AG04449 (cell line): ENCODE measurements at regions of chr4 and their contacts with region 1.

Region 1: DNA sequence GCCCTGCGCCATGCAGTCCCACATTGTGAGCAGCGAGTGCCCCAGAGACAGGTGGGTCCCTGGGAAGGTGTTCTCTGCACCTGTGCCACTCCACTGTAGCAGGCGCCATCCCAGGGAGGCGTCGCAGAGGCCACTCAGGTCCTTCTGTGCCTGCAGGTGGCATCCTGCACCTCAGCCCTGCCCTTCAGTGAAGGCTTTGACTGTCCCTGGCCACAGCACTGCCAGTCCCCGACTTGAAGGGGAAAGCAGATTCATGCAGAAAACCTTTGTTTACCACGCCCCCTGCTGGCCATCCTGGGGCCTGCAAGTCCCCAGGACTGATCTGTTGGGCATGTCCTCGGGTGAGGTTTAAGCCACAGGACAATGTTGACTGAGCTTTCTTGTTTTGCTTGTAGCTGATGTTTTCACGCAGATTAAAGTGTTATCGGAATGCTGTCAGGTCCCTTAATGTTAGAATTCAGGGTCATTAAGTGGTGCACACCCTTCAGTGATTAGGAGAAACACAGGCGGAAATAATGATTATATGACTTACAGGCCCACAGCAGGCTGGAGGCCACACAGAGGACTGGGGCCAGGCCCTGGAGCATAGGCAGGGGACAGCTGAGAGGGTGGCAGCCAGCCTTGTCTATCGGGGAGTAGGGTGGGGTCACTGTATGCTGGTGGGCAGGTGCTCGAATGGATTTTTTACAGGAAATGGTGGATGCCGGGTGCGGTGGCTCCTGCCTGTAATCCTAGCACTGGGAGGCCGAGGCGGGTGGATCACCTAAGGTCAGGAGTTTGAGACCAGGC is 5.0 kb downstream of the TACC3 start:
- DNase-seq: no peak
- H3K4me3 ChIP-seq: no peak overlapping the region
- CTCF ChIP-seq: peak; percentile 87

Region 2: GRCh38 chr4:1351854-1352633 is 374.3 kb before region 1 on chr4:
- CTCF ChIA-PET with region 1: interaction called, 48 read pairs
- POLR2A ChIA-PET with region 1: interaction called, 3 read pairs
- DNase-seq: no peak
- H3K4me3 ChIP-seq: no peak overlapping the region
- CTCF ChIP-seq: peak; percentile 96

Region 3: DNA sequence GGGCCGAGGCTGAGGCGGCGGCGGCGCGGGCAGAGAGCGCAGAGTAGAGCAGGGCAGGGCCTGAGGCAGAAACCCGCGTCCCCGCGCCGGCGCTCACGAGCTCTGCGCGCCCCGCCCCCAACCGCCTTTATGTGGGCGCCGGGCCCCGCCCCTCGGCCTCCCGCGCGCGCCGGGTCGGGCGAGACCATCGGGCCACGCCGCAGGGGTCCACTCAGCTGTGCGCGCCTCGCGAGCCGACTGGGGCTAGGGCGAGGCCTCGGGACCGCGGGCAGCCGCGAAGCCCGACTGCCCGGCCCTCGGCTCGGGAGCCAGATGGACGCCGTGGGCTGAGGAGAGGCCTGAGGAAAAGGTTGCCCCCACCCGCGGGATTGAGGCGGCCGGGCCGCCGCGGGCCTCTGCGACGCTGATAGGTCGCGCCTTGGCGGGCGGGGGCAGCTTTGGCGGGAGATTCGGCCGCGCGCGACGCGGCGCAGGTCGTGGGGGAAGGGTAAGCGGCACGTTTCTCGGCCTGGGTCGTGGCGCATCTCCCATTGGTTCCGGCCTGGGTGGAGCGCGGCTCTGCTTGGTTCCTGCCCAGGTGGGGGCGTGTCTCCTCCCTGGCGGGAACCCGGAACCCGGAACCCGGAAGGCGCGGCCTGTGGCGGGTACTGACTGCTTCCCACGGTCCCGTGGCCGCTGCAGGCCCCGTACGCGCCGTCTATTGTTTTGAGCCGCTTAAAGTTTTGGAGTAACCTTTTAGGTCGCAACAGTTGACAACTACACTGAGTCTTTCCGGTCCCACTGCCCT is 13.9 kb before region 1 on chr4 and contains the start of gene SLBP:
- CTCF ChIA-PET with region 1: interaction called, 56 read pairs
- POLR2A ChIA-PET with region 1: interaction called, 21 read pairs
- DNase-seq: no peak
- H3K4me3 ChIP-seq: peak within 1 kb of the TSS; percentile 89
- CTCF ChIP-seq: no peak

Region 4: GRCh38 chr4:1746265-1746691 is 19.9 kb after region 1 on chr4:
- CTCF ChIA-PET with region 1: interaction called, 83 read pairs
- POLR2A ChIA-PET with region 1: no interaction called
- DNase-seq: no peak
- H3K4me3 ChIP-seq: no peak overlapping the region
- CTCF ChIP-seq: peak; percentile 98

Region 5: GRCh38 chr4:1910643-1911042 is 184.3 kb after region 1 on chr4:
- CTCF ChIA-PET with region 1: interaction called, 35 read pairs
- POLR2A ChIA-PET with region 1: no interaction called
- DNase-seq: peak; percentile 12
- H3K4me3 ChIP-seq: no peak overlapping the region
- CTCF ChIP-seq: peak; percentile 69